Sciatic nerve (tissue), 2 donors: ENCODE measurements at regions of chr2 and their contacts with region 1.

Region 1: GRCh38 chr2:237806334-237806733 is 7.8 kb downstream of the RBM44 start:
- DNase-seq: no peak
- ATAC-seq: no peak

Region 2: DNA sequence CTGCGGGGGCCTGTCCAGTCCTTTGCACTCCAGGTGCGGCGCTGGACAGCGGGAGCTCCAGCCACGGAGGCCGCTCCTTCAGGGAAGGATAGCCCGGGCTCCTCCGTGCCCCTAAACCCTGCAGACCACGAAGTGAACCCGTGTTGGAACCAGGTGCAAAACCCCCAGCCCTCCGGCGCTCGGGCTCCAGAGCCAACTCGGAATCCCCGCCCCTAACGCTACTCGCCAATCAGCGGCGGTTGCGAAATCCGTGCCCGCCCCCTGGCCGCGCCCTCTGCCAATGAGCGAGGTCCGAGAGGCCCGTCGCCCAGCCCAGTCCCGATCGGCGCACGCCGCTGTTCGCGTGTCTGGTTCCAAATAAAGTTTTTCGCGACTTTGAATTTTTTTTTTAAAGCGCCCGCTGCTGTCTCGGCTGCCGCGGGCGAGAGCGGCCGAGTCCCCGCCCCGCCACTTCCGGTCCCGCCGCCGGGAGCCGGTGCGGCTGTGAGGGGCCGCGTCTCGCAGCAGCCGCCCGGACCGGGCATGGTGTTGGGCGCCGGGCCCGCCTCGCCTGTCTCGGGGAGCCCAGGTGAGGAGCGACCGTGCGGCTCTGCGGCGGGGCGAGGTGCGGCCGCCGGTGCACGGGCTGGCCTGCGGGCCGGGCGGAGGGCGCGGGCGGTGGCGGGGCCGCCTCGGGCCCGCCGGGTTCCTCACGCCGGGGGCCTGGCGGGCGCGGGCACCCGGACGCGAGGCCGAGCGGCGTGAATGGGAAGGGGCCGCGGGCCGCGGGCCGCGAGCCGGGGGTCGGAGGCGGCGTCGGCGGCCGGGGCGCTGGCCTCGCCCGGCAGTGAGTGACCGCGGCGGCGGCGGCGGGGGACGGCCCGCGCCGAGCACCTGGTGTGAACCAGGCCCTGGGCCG is 160.5 kb after region 1 on chr2 and contains the start of gene UBE2F:
- intact Hi-C with region 1: no loop called
- DNase-seq: peak; percentile 99
- ATAC-seq: peak; percentile 99
- total RNA-seq, gene UBE2F: 32.6 TPM

Region 3: DNA sequence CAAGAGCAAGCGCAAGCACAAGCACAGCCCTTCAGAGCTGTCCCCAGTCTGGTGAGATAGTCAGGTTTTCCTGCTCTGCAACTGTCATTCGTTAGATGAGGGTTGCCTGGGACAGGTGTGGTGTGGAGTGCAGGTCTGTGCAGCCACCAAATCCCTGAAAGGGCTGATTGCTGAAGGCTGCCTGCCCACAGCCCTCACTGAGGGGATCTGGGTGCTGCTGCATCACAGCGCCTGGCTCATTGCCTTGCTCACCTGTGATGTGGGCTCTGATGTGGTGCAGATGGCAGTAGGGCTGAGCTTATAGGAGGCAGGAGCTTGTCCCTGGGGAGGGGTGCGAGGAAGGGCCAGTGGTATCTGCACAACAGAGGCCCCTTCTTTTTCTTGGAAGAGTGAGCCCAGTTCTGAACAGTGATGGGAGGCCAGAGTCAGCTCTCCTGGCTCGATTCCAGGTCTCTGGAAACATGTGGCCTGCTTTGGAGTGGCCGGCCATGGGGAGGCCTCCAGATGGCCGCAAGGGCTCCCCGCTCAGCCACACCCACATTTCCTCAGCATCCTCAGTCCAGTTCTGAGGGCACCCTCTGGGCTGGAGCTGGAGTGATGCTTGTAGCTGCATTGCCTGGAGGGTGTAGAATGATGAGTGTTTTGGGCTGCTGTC is 171.9 kb after region 1 on chr2:
- intact Hi-C with region 1: no loop called
- DNase-seq: no peak
- ATAC-seq: peak; percentile 65

Region 4: DNA sequence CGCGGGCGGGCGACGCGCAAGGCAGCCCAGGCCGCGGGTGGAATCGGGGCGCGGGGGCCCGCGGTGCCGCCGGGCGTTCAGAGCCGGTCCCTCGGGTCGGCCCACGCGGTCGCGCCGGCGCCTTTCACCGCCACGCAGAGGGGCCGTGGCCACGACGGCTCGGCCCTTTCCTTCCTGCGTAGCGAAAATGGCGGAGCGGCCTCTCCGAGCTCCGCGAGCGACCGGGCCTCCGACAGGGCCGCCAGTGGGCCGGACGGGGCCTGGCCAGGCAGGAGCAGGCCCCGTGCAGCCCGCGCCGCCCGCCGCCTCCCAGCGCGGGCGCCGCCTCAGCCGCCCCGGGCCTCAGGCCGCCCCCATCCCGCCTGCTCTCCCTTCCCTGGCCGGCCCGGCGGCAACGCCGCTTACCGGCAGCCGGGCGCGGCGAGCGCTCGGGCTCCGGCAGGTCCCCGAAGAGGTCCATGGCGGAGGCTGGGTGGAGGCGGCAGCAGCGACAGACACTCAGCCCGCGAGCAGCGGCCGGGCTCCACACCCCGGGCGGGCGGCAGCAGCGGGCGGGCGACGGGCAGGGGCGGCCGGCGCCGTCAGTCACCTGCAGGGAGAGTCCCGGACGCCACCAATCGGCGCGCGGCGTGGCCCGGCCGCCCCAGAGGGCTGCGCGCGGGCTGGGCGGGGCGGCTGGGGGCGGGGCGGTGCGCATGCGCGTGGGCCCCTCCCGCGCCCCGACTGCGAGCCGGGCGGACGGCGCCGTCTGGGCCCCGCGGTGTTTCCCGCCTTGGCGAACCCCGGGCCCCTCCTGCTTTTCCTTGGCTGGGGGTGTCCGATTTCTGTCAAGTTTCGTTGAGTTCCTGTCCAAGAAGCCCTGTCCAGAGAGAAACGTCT is 397.0 kb after region 1 on chr2 and contains the start of gene ILKAP:
- intact Hi-C with region 1: loop called (anchors 2 kb)
- DNase-seq: peak; percentile 92
- ATAC-seq: peak; percentile 98
- total RNA-seq, gene ILKAP: 61.7 TPM